SK-N-SH (cell line): ENCODE measurements at regions of chr11 and their contacts with region 1.

Region 1: DNA sequence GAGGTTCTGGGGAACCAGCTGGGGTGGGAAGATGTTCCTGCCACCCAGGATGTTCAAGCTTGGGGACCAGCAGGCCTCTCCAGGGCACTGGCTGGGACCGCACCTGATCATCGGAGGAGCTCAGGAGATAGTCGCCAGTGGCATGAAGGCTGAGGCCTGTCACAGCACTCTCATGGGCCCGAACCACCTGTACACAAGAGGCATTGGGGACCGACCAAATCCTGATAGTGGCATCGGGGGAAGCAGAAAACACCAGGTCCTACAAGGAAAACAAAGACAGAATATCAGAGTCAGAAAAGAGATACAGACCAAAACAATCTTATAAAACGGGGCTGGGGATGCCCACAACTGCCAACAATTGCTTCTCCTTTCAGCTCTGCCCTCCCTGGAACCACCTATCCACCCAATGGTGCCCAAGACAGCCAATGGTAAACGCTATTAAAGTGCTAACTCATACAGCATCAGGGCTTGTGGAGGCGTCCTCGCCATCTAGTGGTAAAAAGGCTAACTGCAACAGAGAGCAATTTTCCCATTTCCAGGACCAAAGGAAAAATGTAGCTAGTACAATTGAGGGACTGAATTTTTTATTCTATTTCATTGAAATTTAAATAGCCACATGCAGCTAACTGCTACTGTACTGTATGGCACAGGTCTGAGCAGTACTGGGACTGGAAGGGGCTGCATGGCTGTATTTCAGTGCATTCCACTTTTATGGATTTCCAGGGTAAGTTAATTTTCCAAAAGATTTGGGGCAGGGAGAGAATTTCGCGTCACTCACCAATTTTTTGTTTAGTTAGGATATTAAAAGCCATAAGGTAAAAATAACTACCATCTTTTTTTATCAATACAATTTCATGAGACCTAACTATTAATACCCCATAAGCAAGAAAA is 7.1 kb downstream of the PRPF19 start:
- DNase-seq: peak; percentile 69
- H3K4me3 ChIP-seq: no peak overlapping the region; a peak in 1 of 4 replicates
- H3K27ac ChIP-seq: no peak overlapping the region
- H3K4me1 ChIP-seq: peaks cover 0 to 1% of the 10 kb centered on the region in 2 experiments; a peak in 1 of 4 replicates
- H3K27me3 ChIP-seq: no peaks in the 10 kb centered on the region
- CTCF ChIP-seq: peak; percentile 95
- EP300 ChIP-seq: no peak
- RAD21 ChIP-seq: peak; percentile 71

Region 2: DNA sequence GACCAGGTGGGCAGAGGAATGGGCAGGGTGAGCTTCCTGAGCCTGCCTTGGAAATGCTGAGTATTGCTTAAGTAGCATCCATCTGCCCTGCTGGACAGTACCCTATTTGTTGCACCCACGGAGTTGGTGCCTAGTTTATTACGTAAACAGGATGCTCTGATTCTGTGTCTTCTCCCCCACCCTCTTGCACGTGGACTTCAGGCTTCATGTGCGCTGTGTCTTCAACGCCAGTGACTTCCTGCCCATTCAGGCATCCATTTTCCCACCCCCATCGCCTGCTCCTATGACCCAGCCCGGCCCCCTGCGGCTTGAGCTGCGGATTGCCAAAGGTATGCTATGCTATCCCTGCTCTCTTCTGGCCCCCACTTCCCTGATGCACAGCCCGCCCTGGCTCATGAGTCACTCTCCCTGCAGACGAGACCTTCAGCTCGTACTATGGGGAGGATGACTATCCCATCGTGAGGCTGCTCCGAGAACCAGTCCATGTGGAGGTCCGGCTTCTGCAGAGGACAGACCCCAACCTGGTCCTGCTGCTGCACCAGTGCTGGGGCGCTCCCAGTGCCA is 26.2 kb before region 1 on chr11:
- CTCF ChIA-PET with region 1: interaction called, 16 read pairs
- POLR2A ChIA-PET with region 1: no interaction called
- DNase-seq: peak; percentile 8
- H3K4me3 ChIP-seq: no peak overlapping the region
- H3K27ac ChIP-seq: no peak overlapping the region
- H3K4me1 ChIP-seq: peaks cover 0 to 8% of the 10 kb centered on the region in 2 experiments; a peak in 1 of 4 replicates
- H3K27me3 ChIP-seq: no peaks in the 10 kb centered on the region
- CTCF ChIP-seq: no peak
- EP300 ChIP-seq: no peak
- RAD21 ChIP-seq: no peak

Region 3: DNA sequence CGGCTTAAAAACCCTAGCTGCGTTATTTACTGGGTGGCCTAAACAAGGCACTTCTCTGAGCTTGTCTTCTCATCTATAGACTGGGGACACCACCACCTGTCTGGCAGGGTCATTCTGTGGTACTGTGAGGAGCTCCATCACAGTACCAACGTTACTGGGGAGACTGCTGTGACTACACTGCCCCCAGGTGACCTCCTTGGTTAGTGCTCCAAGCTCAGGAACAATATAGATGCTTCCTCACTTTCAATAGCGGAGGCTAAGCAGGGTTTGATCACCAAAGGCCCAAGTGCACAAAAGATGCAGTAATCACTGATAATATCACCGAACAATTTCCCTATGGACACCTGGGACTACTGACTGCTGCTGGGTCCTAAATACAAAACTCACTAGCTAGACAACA is 11.7 kb before region 1 on chr11:
- CTCF ChIA-PET with region 1: interaction called, 55 read pairs
- POLR2A ChIA-PET with region 1: interaction called, 4 read pairs
- DNase-seq: peak; percentile 63
- H3K4me3 ChIP-seq: no peak overlapping the region; a peak in 1 of 4 replicates
- H3K27ac ChIP-seq: no peak overlapping the region
- H3K4me1 ChIP-seq: peaks cover 0 to 11% of the 10 kb centered on the region in 2 experiments; a peak in 1 of 4 replicates
- H3K27me3 ChIP-seq: no peaks in the 10 kb centered on the region
- CTCF ChIP-seq: peak; percentile 67
- EP300 ChIP-seq: no peak
- RAD21 ChIP-seq: peak; percentile 82

Region 4: GRCh38 chr11:60924110-60924905 is 25.0 kb after region 1 on chr11 and contains the start of gene TMEM132A:
- CTCF ChIA-PET with region 1: interaction called, 21 read pairs
- POLR2A ChIA-PET with region 1: no interaction called
- DNase-seq: peak; percentile 99
- H3K4me3 ChIP-seq: peak within 1 kb of the TSS; percentile 80 to 92
- H3K27ac ChIP-seq: peak within 1 kb of the TSS in 1 of 2 experiments; percentile 82; a peak in 2 of 4 replicates
- H3K4me1 ChIP-seq: peaks cover 0 to 28% of the 10 kb centered on the region in 2 experiments; a peak in 3 of 4 replicates
- H3K27me3 ChIP-seq: no peaks in the 10 kb centered on the region
- CTCF ChIP-seq: no peak
- EP300 ChIP-seq: peak in 1 of 2 experiments; percentile 40; a peak in 1 of 4 replicates
- RAD21 ChIP-seq: no peak
- polyA plus RNA-seq, gene TMEM132A: 62.2 and 66.9 TPM in 2 replicates

Region 5: DNA sequence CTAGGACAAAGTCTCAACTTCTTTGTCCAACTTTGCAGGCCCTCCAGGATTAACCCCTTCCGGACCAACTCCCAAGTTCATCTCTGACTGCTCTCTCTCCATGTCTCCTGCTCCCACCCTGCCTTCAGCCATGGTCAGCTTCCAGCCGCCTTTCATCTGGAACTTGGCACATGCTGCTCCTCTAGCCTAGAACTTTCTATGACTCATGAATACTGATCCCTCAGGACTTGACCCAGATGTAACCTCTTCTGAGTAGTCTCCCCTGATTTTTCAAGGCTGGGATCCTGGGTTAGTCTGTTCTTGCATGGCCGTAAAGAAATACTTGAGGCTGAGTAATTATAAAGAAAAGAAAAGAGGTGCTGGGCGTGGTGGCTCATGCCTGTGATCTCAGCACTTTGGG is 57.9 kb after region 1 on chr11:
- CTCF ChIA-PET with region 1: no interaction called
- POLR2A ChIA-PET with region 1: no interaction called
- DNase-seq: no peak
- H3K4me3 ChIP-seq: no peak overlapping the region
- H3K27ac ChIP-seq: no peak overlapping the region
- H3K4me1 ChIP-seq: no peaks in the 10 kb centered on the region
- H3K27me3 ChIP-seq: no peaks in the 10 kb centered on the region; the same call in 1 of the 2 replicates
- CTCF ChIP-seq: no peak
- EP300 ChIP-seq: no peak
- RAD21 ChIP-seq: no peak